ENCODE measurements at regions of chr5 and their contacts with region 1.

Region 1: GRCh38 chr5:9498541-9499497 is 47.1 kb downstream of the SEMA5A start:
- DNase-seq: peak in 1 of 2 experiments; percentile 52
- H3K4me3 ChIP-seq: no peak overlapping the region
- H3K27ac ChIP-seq: no peak overlapping the region
- H3K4me1 ChIP-seq: peaks cover 0 to 10% (median 3%) of the 10 kb centered on the region in 4 experiments; a peak in 2 of 7 replicates
- H3K27me3 ChIP-seq: no peaks in the 10 kb centered on the region
- CTCF ChIP-seq: peak; percentile 50 to 79 (median 75)
- EP300 ChIP-seq: no peak
- POLR2A ChIP-seq: no peak
- RAD21 ChIP-seq: peak; percentile 83

Region 2: DNA sequence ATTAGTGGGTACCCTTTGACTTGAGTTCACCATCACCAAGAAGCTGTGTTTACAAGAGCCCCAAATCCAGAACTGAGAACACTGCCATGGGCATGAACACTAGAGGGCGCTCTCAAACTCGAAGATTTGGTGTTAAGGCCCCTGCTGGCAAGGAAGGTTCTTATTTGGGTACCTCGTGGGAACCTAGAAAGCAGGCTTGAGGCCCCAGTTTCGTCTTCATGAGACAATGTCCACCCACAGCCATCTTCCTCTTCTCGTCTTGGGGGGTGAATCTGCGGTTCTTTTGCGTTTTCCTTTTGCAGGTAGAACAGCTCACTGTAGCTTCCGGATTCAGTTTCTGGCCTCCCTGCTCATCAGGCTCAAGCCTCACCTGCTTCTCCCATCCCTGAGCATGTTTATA is 137.0 kb before region 1 on chr5:
- CTCF ChIA-PET with region 1: interaction called, 10 read pairs
- POLR2A ChIA-PET with region 1: no interaction called
- DNase-seq: peak; percentile 60 to 83
- H3K4me3 ChIP-seq: no peak overlapping the region
- H3K27ac ChIP-seq: no peak overlapping the region
- H3K4me1 ChIP-seq: peaks cover 3 to 5% (median 4%) of the 10 kb centered on the region in 4 experiments; a peak in 4 of 7 replicates
- H3K27me3 ChIP-seq: no peaks in the 10 kb centered on the region
- CTCF ChIP-seq: peak; percentile 55 to 98 (median 90)
- EP300 ChIP-seq: no peak
- POLR2A ChIP-seq: no peak
- RAD21 ChIP-seq: peak; percentile 76 to 85

Region 3: GRCh38 chr5:9445826-9446388 is 52.9 kb before region 1 on chr5:
- CTCF ChIA-PET with region 1: no interaction called
- POLR2A ChIA-PET with region 1: no interaction called
- DNase-seq: no peak
- H3K4me3 ChIP-seq: no peak overlapping the region
- H3K27ac ChIP-seq: no peak overlapping the region
- H3K4me1 ChIP-seq: no peaks in the 10 kb centered on the region
- H3K27me3 ChIP-seq: no peaks in the 10 kb centered on the region
- CTCF ChIP-seq: no peak
- EP300 ChIP-seq: no peak
- POLR2A ChIP-seq: no peak
- RAD21 ChIP-seq: no peak

Region 4: GRCh38 chr5:9483243-9483642 is 15.6 kb before region 1 on chr5:
- CTCF ChIA-PET with region 1: interaction called, 10 read pairs
- POLR2A ChIA-PET with region 1: no interaction called
- DNase-seq: no peak
- H3K4me3 ChIP-seq: no peak overlapping the region
- H3K27ac ChIP-seq: no peak overlapping the region
- H3K4me1 ChIP-seq: no peaks in the 10 kb centered on the region; a peak in 3 of 7 replicates
- H3K27me3 ChIP-seq: no peaks in the 10 kb centered on the region
- CTCF ChIP-seq: no peak
- EP300 ChIP-seq: no peak
- POLR2A ChIP-seq: no peak
- RAD21 ChIP-seq: no peak

Region 5: DNA sequence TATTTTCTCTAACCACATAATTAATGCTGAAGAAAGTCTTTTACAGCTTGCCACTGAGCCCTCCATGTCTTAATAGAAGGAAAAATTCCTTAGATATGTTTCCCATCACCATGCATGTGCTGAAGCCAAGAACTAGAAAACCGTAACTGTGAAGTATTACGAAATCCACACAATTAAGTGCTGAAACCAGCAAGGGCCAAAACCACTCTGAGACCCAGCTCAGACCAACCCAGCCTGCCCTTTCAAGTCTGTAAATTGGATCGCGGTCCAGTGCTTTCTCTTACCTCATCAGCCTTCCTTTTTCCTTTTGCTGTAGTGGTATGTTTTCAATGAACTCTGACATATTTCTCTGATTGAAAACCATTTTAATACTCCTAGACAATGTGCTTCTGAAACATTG is 20.7 kb after region 1 on chr5:
- CTCF ChIA-PET with region 1: interaction called, 10 read pairs
- POLR2A ChIA-PET with region 1: no interaction called
- DNase-seq: no peak
- H3K4me3 ChIP-seq: no peak overlapping the region
- H3K27ac ChIP-seq: no peak overlapping the region
- H3K4me1 ChIP-seq: no peaks in the 10 kb centered on the region
- H3K27me3 ChIP-seq: no peaks in the 10 kb centered on the region
- CTCF ChIP-seq: no peak
- EP300 ChIP-seq: no peak
- POLR2A ChIP-seq: no peak
- RAD21 ChIP-seq: no peak